IMR-90 (cell line): ENCODE measurements at regions of chrX and their contacts with region 1.

Region 1: DNA sequence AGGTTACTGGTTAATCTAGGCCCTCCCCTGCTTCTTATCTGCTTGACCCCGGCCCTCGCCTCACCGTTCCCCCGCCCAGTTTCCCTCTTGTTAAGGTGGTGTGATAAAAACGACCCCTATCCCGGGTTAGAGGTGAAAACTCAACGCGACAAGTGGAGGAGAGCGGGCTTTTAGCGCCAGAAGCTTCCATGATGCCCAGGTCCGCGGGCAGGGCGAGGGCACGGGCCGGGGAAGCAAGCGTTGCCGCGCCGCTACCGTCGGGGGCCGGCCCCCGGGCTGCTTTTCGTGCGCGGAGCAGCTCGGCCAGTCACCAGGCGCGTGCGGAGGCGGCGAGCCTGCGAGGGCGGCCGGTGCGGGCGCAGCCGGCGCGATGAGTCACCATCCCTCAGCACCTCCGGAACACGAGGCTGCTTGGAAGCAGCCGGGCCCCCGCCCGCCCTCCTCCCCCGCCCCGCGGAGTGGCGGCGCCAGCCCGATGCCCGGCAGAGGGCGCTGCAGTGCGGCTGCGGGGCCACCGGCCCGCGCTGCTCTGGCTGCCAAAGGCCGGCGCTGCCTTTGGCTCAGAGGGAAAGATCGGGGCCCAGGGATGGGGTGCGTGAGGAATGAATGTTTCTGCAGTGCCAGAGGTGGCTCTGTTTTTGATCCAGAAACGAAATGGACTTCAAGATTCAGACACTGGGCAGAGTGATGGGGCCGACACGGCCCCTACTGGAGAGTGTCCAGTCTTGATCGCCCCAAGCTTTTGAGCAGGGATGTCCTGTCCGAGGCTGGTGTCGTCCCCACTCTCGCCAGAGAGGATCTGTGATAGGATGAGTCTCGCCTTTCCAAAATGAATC is 107.8 kb downstream of the NHSL2 start:
- DNase-seq: peak; percentile 90
- ATAC-seq: peak; percentile 98
- H3K4me3 ChIP-seq: no peak overlapping the region
- H3K27ac ChIP-seq: peak overlapping the region; percentile 12; the same call in 1 of the 2 replicates
- H3K4me1 ChIP-seq: peaks cover 2% of the 10 kb centered on the region; the same call in 1 of the 2 replicates
- H3K27me3 ChIP-seq: peaks cover 53% of the 10 kb centered on the region
- CTCF ChIP-seq: peak; percentile 67
- POLR2A ChIP-seq: no peak
- RAD21 ChIP-seq: peak; percentile 65

Region 2: GRCh38 chrX:72126539-72127140 is 108.1 kb after region 1 on chrX:
- CTCF ChIA-PET with region 1: interaction called, 6 read pairs
- POLR2A ChIA-PET with region 1: no interaction called
- dilution Hi-C with region 1: no loop called
- in situ Hi-C with region 1: loop called (anchors 5 kb)
- intact Hi-C with region 1: loop called (anchors 1 kb)
- DNase-seq: peak; percentile 80
- ATAC-seq: peak; percentile 89
- H3K4me3 ChIP-seq: no peak overlapping the region
- H3K27ac ChIP-seq: no peak overlapping the region
- H3K4me1 ChIP-seq: peaks cover 2% of the 10 kb centered on the region; the same call in 1 of the 2 replicates
- H3K27me3 ChIP-seq: peaks cover 50% of the 10 kb centered on the region
- CTCF ChIP-seq: peak; percentile 94
- POLR2A ChIP-seq: no peak
- RAD21 ChIP-seq: peak; percentile 85

Region 3: GRCh38 chrX:72181178-72182125 is 163.0 kb after region 1 on chrX and contains the start of gene PIN4:
- CTCF ChIA-PET with region 1: no interaction called
- POLR2A ChIA-PET with region 1: no interaction called
- dilution Hi-C with region 1: no loop called
- in situ Hi-C with region 1: no loop called
- intact Hi-C with region 1: loop called (anchors 2 kb)
- DNase-seq: peak; percentile 97
- ATAC-seq: peak; percentile 98
- H3K4me3 ChIP-seq: peak within 1 kb of the TSS; percentile 87
- H3K27ac ChIP-seq: peak within 1 kb of the TSS; percentile 72
- H3K4me1 ChIP-seq: peaks cover 2% of the 10 kb centered on the region
- H3K27me3 ChIP-seq: peaks cover 7% of the 10 kb centered on the region; the same call in 1 of the 2 replicates
- CTCF ChIP-seq: no peak
- POLR2A ChIP-seq: peak; percentile 57; the same call in 1 of the 2 replicates
- RAD21 ChIP-seq: no peak
- total RNA-seq, gene PIN4: 2.2 and 6.1 TPM in 2 replicates

Region 4: DNA sequence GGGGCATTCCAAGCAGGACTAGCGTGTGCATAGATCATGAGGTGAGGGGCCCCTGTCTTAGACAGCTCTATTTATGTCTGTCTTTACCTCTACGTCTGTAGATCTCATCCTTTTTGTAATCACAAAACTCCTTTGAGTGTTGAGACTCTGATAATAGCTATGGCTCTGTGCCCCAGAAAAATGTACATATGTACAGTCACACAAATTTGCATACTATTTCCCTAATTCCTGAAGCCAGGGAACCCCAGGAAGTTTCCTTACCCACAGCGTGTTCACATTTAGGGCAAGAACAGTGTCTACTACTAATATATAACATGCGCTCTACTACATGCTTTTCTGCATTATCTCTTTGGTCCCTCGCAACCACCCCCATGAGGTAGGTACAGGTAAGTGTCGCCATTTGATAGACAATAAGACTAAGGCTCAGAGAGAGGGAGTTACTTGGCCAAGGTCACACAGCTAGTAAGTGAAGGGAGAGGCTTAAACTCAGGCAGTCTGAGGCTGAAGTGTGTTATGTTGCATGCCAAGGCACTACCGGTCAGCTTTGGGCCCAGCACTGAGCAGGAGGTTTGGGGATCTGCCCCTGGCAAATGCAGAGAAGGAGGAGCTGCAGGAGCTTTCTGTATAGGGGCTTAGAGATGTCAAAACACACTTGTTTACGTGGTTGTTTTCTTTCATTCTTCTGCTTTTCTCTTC is 308.3 kb after region 1 on chrX:
- CTCF ChIA-PET with region 1: no interaction called
- POLR2A ChIA-PET with region 1: no interaction called
- dilution Hi-C with region 1: no loop called
- in situ Hi-C with region 1: no loop called
- intact Hi-C with region 1: no loop called
- DNase-seq: no peak
- ATAC-seq: no peak
- H3K4me3 ChIP-seq: no peak overlapping the region
- H3K27ac ChIP-seq: no peak overlapping the region
- H3K4me1 ChIP-seq: no peaks in the 10 kb centered on the region
- H3K27me3 ChIP-seq: peaks cover 14% of the 10 kb centered on the region
- CTCF ChIP-seq: no peak
- POLR2A ChIP-seq: no peak
- RAD21 ChIP-seq: no peak

Region 5: GRCh38 chrX:72430405-72430968 is 412.0 kb after region 1 on chrX:
- CTCF ChIA-PET with region 1: no interaction called
- POLR2A ChIA-PET with region 1: no interaction called
- dilution Hi-C with region 1: no loop called
- in situ Hi-C with region 1: no loop called
- intact Hi-C with region 1: no loop called
- DNase-seq: no peak
- ATAC-seq: no peak
- H3K4me3 ChIP-seq: no peak overlapping the region
- H3K27ac ChIP-seq: no peak overlapping the region
- H3K4me1 ChIP-seq: no peaks in the 10 kb centered on the region
- H3K27me3 ChIP-seq: peaks cover 7% of the 10 kb centered on the region
- CTCF ChIP-seq: no peak
- POLR2A ChIP-seq: no peak
- RAD21 ChIP-seq: no peak

Region 6: GRCh38 chrX:72540318-72540717 is 521.8 kb after region 1 on chrX:
- CTCF ChIA-PET with region 1: no interaction called
- POLR2A ChIA-PET with region 1: no interaction called
- dilution Hi-C with region 1: no loop called
- in situ Hi-C with region 1: loop called (anchors 25 kb)
- intact Hi-C with region 1: loop called (anchors 10 kb)
- DNase-seq: peak; percentile 58
- ATAC-seq: peak; percentile 75
- H3K4me3 ChIP-seq: no peak overlapping the region
- H3K27ac ChIP-seq: no peak overlapping the region
- H3K4me1 ChIP-seq: no peaks in the 10 kb centered on the region
- H3K27me3 ChIP-seq: peaks cover 7% of the 10 kb centered on the region; the same call in 1 of the 2 replicates
- CTCF ChIP-seq: peak; percentile 46
- POLR2A ChIP-seq: no peak
- RAD21 ChIP-seq: peak; percentile 42